ENCODE measurements at regions of chr19 and their contacts with region 1.

Region 1: GRCh38 chr19:36132489-36132891 is 7.4 kb upstream of the CAPNS1 start:
- DNase-seq: peak; percentile 43
- ATAC-seq: peak; percentile 37
- H3K4me3 ChIP-seq: no peak overlapping the region
- H3K27ac ChIP-seq: no peak overlapping the region
- H3K4me1 ChIP-seq: peaks cover 5% of the 10 kb centered on the region
- H3K27me3 ChIP-seq: no peaks in the 10 kb centered on the region
- CTCF ChIP-seq: no peak
- EP300 ChIP-seq: no peak
- POLR2A ChIP-seq: no peak
- RAD21 ChIP-seq: no peak

Region 2: GRCh38 chr19:36060430-36060829 is 72.1 kb before region 1 on chr19:
- CTCF ChIA-PET with region 1: interaction called, 7 read pairs
- POLR2A ChIA-PET with region 1: interaction called, 4 read pairs
- RAD21 ChIA-PET with region 1: interaction called, 10 read pairs
- SMC1A ChIA-PET with region 1: interaction called, 10 read pairs
- in situ Hi-C with region 1: no loop called
- intact Hi-C with region 1: no loop called
- DNase-seq: no peak
- ATAC-seq: peak; percentile 82
- H3K4me3 ChIP-seq: no peak overlapping the region
- H3K27ac ChIP-seq: no peak overlapping the region
- H3K4me1 ChIP-seq: peaks cover 3% of the 10 kb centered on the region; the same call in 1 of the 2 replicates
- H3K27me3 ChIP-seq: no peaks in the 10 kb centered on the region
- CTCF ChIP-seq: peak; percentile 60 to 75 (median 67); a peak in 5 of 6 replicates
- EP300 ChIP-seq: no peak
- POLR2A ChIP-seq: no peak
- RAD21 ChIP-seq: peak; percentile 64

Region 3: DNA sequence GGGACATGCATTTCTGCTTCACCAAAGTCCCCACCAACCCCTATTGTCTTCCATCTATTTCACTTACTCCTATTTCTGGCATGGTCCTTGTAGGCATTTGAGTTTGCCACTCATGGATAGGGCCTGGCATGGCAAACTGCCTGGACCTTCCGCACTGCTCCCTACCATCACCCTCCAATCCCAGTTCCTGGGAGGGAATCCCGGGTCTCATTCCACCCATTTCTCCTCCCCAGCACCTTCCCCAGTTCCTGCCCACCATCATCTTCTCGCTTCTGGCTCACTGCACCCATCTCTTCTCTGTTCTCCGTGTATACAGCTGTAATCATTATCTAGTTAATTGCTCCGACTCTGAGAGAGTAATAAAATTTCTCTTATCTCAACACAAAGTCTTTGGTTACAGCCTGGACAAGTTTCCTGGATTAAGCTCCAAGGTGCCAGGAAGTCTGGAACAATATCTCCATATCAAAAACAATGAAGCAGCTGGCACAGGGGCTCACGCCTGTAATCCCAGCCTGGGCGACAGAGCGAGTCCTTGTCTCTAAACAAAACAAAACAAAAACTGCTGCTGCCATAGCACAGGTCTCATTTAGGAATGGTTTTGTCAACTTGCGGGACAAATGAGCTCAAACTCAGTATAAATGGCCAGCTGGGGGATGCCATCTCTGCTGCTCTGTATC is 36.7 kb after region 1 on chr19:
- CTCF ChIA-PET with region 1: interaction called, 76 read pairs
- POLR2A ChIA-PET with region 1: interaction called, 7 read pairs
- RAD21 ChIA-PET with region 1: interaction called, 69 read pairs
- SMC1A ChIA-PET with region 1: interaction called, 38 read pairs
- in situ Hi-C with region 1: loop called (anchors 5 kb)
- intact Hi-C with region 1: loop called (anchors 1 kb)
- DNase-seq: no peak
- ATAC-seq: no peak
- H3K4me3 ChIP-seq: no peak overlapping the region
- H3K27ac ChIP-seq: no peak overlapping the region
- H3K4me1 ChIP-seq: no peaks in the 10 kb centered on the region
- H3K27me3 ChIP-seq: no peaks in the 10 kb centered on the region
- CTCF ChIP-seq: no peak
- EP300 ChIP-seq: no peak
- POLR2A ChIP-seq: no peak
- RAD21 ChIP-seq: no peak

Region 4: DNA sequence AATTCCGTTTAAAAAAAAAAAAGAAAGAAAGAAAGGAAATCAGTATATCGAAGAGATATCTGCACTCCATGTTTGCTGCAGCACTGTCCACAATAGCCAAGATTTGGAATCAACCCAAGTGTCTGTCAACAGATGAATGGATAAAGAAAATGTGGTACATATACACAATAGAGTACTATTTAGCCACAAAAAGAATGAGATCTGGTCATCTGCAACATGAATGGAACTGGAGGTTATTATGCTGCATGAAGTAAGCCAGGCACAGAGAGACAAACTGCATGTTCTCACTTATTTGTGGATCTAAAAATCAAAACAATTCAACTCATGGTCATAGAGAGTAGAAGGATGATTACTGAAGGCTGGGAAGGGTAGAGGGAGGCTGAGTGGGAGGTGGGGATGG is 65.6 kb after region 1 on chr19:
- CTCF ChIA-PET with region 1: no interaction called
- POLR2A ChIA-PET with region 1: no interaction called
- RAD21 ChIA-PET with region 1: no interaction called
- SMC1A ChIA-PET with region 1: no interaction called
- in situ Hi-C with region 1: no loop called
- intact Hi-C with region 1: no loop called
- DNase-seq: no peak
- ATAC-seq: no peak
- H3K4me3 ChIP-seq: no peak overlapping the region
- H3K27ac ChIP-seq: no peak overlapping the region
- H3K4me1 ChIP-seq: no peaks in the 10 kb centered on the region; the same call in 1 of the 2 replicates
- H3K27me3 ChIP-seq: no peaks in the 10 kb centered on the region
- CTCF ChIP-seq: no peak
- EP300 ChIP-seq: no peak
- POLR2A ChIP-seq: no peak
- RAD21 ChIP-seq: no peak

Region 5: DNA sequence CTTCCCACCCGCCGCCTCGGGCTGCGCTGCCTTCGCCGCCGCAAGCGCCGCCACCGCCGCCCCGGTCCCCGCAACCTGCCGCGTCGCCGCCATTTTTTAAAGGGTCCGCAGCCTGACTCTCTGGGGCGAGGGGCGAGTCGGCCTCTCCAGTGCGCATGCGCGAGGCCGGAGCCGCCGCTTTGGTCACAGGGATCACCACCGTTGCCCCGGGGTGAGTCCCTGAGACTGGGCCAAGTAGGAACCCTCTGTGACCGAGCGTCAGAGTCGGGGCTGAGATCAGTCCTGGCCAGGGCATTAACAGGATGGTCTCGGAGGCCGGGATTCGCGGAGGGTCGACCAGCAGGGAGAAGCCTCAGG is 125.0 kb after region 1 on chr19:
- CTCF ChIA-PET with region 1: no interaction called
- POLR2A ChIA-PET with region 1: no interaction called
- RAD21 ChIA-PET with region 1: no interaction called
- SMC1A ChIA-PET with region 1: no interaction called
- in situ Hi-C with region 1: no loop called
- intact Hi-C with region 1: no loop called
- DNase-seq: no peak
- ATAC-seq: no peak
- H3K4me3 ChIP-seq: no peak overlapping the region
- H3K27ac ChIP-seq: no peak overlapping the region
- H3K4me1 ChIP-seq: no peaks in the 10 kb centered on the region
- H3K27me3 ChIP-seq: no peaks in the 10 kb centered on the region
- CTCF ChIP-seq: no peak
- EP300 ChIP-seq: no peak
- POLR2A ChIP-seq: no peak
- RAD21 ChIP-seq: no peak

Region 6: DNA sequence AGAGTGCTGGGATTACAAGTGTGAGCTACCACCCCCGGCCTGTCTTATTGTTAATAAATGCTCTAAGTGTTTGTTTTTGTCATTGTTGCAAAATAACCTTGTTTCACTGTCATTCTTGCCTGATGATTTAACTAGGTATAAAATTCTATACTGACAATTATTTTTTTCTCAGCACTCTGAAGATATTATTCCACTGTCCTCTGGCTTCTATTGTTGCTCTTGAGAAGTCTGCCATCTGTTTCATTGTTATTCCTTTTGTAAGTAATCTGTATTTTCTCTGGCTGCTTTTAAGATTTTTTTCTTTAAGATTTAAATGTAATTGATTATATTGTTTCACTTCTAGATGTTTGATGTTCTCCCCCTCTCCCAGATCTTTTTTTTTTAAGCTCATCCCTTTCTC is 963.4 kb after region 1 on chr19:
- CTCF ChIA-PET with region 1: no interaction called
- POLR2A ChIA-PET with region 1: no interaction called
- RAD21 ChIA-PET with region 1: no interaction called
- SMC1A ChIA-PET with region 1: no interaction called
- in situ Hi-C with region 1: loop called (anchors 10 kb)
- intact Hi-C with region 1: no loop called
- DNase-seq: no peak
- ATAC-seq: no peak
- H3K4me3 ChIP-seq: no peak overlapping the region
- H3K27ac ChIP-seq: no peak overlapping the region
- H3K4me1 ChIP-seq: no peaks in the 10 kb centered on the region
- H3K27me3 ChIP-seq: no peaks in the 10 kb centered on the region
- CTCF ChIP-seq: no peak
- EP300 ChIP-seq: no peak
- POLR2A ChIP-seq: no peak
- RAD21 ChIP-seq: no peak

Measured in GM12878 (cell line).